BJ (cell line): ENCODE measurements at regions of chr5 and their contacts with region 1.

Region 1: GRCh38 chr5:55691265-55692105 is 20.6 kb downstream of the SLC38A9 start:
- DNase-seq: no peak
- H3K4me3 ChIP-seq: no peak overlapping the region
- H3K27me3 ChIP-seq: no peaks in the 10 kb centered on the region
- CTCF ChIP-seq: peak; percentile 38

Region 2: DNA sequence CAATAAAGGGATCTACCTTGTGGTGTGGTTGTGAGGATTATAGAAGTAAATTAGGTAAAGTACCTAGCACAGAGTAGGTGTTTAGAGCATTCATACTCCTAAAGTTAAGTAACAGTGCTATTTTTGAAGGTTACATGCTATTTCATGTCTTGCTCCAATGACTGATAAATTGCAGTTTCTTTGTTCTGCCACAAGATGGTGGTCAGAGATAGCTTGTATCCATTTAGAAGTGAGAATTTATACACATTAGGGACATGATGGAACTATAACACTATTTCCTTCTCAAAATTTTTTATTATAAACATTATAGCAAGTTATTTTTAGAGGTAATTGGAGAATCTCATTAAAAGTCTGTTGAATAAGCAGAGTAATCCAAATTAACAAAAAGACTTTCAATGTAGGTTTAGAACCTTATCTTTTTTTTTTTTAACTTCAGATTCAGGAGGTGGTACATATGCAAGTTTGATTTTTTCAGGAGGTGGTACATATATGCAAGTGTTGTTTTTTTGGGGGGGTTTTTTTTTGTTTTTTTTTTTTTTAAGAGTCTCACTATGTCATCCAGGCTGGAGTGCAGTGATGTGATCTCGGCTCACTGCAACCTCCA is 366.6 kb before region 1 on chr5:
- CTCF ChIA-PET with region 1: interaction called, 10 read pairs
- POLR2A ChIA-PET with region 1: no interaction called
- DNase-seq: no peak
- H3K4me3 ChIP-seq: no peak overlapping the region
- H3K27me3 ChIP-seq: no peaks in the 10 kb centered on the region
- CTCF ChIP-seq: peak; percentile 58

Region 3: DNA sequence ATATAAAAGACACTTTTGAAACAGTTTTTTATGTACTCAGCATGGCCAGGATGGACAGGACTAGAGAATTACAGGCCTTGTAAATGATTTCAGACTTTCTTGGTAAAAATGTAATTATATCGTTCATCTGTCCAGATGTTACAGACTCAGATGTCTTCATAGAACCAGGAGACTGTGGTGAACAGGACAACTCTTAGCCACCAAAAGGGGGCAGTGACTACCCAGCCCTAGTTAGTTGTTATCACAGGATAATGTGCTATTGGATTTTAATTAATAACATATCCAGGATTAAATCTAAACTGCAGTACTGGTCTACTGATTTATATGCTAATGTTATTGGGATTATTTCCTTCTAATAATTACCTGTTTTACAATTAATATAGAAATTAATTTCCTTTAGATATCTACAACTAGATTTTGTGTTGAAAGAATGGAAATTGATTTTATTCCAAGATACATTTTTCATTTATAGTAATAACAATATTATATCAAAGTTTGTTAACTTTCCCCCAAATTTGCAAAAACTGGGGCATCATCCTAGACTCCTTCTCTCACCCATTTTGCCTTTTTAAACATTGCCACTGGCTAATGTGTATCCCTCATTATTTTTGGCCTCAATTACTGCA is 284.3 kb before region 1 on chr5:
- CTCF ChIA-PET with region 1: interaction called, 53 read pairs
- POLR2A ChIA-PET with region 1: no interaction called
- DNase-seq: no peak
- H3K4me3 ChIP-seq: no peak overlapping the region
- H3K27me3 ChIP-seq: no peaks in the 10 kb centered on the region
- CTCF ChIP-seq: peak; percentile 76

Region 4: GRCh38 chr5:55675119-55675518 is 16.4 kb before region 1 on chr5:
- CTCF ChIA-PET with region 1: interaction called, 11 read pairs
- POLR2A ChIA-PET with region 1: no interaction called
- DNase-seq: no peak
- H3K4me3 ChIP-seq: no peak overlapping the region
- H3K27me3 ChIP-seq: no peaks in the 10 kb centered on the region
- CTCF ChIP-seq: no peak